Activated B cell treated with CpG ODN at 0.5 μM for 24 hours (primary cell): ENCODE measurements at regions of chr6 and their contacts with region 1.

Region 1: DNA sequence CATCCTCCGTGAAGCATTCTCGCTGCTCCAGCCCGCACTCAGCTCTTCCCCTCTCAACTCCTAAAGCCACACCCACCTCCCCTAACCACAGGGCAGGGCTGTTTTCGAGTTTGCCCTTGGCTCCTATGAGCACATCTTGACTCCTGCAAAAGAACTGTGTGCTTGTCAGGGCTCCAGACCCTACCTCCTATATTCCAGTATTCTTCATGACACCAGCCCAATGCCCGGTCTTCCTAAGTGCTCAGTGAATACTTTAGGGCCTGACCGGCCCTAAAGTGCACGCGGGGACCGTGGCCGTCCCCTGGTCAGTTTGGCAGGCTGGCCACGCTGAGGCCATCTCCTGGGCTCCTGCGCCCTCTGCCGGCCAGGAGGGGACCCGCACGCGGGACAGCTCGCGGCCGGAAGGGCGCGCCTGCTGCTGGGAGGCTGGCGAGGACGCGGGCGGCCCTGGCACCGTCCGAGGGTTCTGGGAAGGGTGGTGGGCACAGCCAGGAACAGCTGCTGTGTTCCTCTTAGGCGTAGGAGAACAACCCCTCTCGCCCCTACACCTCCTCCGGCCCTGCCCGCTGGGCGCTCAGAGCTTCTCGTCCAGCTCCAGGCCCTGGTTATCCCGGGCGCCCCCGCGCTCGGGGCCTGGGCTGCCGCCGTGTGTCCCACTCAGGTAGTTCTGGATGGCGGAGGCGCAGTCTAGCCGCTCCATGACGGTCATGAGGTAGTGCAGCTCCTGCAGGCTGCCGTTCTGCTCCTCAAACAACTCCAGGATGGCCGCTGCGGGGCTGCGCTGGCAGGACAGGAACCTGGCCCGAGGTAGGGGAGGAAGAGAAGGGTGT is 11.0 kb downstream of the UNC5CL start:
- DNase-seq: peak; percentile 80
- ATAC-seq: peak; percentile 89
- H3K4me3 Mint-ChIP-seq: peak overlapping the region; percentile 84
- H3K27ac Mint-ChIP-seq: peak overlapping the region; percentile 20
- H3K4me1 Mint-ChIP-seq: peaks cover 20% of the 10 kb centered on the region
- H3K27me3 Mint-ChIP-seq: no peaks in the 10 kb centered on the region
- CTCF ChIP-seq: peak; percentile 92

Region 2: DNA sequence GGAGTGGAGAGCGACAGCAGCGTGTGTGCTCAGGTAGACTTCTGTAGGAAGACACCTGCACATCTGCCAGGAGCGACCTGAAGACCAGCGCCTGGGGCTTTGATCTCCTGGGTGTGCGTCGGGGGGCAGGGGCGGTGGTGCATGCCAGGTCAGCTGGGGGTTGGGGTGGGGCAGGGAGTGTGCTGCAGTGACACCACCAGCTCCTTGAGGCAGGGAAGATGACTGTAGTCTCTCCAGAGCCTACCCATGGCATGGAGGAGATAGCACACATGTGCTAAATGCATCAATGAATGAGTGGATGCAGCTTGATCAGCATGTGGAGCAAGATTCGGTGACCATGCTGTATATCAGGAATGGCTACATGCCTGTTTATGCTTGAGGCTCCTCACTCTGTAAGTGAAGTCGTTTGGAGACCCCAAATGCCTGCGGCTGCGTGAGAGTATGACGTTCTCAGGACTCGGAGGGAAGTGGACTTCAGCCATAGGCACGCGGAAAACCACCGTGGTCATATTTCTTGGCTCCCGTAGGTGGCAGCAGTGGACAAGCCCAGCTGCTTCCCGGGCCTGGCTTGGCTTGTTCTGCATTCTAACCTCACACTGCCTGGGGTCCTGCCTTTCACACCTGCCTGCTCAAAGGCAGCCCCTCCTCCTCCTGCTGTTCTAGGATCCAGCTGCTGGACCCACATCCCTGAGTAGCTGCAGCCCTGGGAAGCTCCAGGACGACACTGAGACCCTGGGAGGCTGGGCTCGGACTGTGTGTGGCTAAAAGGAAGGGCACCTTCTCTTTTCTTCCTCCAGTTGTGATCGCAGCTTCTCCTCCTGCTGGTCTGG is 1666.1 kb before region 1 on chr6:
- CTCF ChIA-PET with region 1: interaction called, 4 read pairs
- POLR2A ChIA-PET with region 1: no interaction called
- intact Hi-C with region 1: loop called (anchors 5 kb)
- DNase-seq: peak; percentile 33
- ATAC-seq: peak; percentile 75
- H3K4me3 Mint-ChIP-seq: no peak overlapping the region
- H3K27ac Mint-ChIP-seq: no peak overlapping the region
- H3K4me1 Mint-ChIP-seq: peaks cover 2% of the 10 kb centered on the region
- H3K27me3 Mint-ChIP-seq: peaks cover 7% of the 10 kb centered on the region
- CTCF ChIP-seq: no peak

Region 3: DNA sequence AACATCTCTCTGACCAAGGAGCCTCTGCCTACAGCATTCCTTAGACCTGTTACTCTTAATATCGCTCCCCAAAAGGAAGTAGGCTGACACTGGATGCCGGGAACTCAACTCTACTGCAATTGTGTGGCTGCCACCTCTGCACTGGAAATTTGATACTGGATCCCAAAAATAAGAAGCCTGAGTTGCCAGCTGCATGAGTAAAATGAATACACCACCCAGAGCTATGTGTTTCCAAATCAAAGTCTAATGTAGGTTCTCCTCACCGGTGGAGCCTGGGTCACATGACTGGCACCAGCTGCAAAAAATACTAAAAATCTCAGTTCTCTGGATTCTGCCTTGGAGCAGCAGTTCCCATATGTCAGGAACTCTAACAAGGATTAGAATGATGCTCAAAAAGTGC is 25.8 kb before region 1 on chr6:
- CTCF ChIA-PET with region 1: interaction called, 4 read pairs
- POLR2A ChIA-PET with region 1: no interaction called
- intact Hi-C with region 1: loop called (anchors 1 kb)
- DNase-seq: no peak
- ATAC-seq: no peak
- H3K4me3 Mint-ChIP-seq: no peak overlapping the region
- H3K27ac Mint-ChIP-seq: no peak overlapping the region
- H3K4me1 Mint-ChIP-seq: no peaks in the 10 kb centered on the region
- H3K27me3 Mint-ChIP-seq: peaks cover 27% of the 10 kb centered on the region
- CTCF ChIP-seq: no peak

Region 4: DNA sequence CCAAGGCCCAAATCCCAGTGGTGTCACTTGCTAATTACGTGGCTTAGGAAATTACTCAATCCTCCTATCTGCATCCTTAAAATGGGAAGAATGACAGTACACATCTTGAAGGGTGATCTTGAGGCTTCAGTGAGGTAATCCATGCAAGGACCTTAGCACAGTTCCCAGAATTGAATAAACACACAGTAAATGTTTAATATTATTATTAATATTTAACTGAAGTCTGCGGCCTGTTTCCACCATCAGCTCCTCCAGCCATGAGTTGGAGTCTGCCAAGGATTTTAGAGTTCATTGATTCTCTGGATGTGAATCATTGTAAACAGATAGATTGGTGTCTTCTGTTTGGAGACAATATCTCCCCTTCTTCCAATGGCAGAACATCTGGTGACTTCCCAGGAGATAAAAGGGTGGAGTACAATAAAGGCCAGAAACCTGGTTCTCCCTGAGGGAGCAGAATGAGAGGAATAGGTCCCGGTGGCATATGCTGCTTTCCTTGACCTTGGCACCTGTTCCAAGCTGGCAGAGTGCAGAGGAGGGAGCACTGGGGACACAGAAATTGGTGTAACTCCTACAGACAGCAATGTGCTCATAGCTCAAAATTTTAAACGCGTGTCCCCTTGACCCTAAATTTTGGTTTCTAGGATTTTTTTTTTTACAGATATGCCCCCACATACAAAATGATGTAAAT is 14.4 kb before region 1 on chr6:
- CTCF ChIA-PET with region 1: interaction called, 16 read pairs
- POLR2A ChIA-PET with region 1: no interaction called
- intact Hi-C with region 1: no loop called
- DNase-seq: no peak
- ATAC-seq: no peak
- H3K4me3 Mint-ChIP-seq: no peak overlapping the region
- H3K27ac Mint-ChIP-seq: no peak overlapping the region
- H3K4me1 Mint-ChIP-seq: no peaks in the 10 kb centered on the region
- H3K27me3 Mint-ChIP-seq: peaks cover 6% of the 10 kb centered on the region
- CTCF ChIP-seq: no peak

Region 5: DNA sequence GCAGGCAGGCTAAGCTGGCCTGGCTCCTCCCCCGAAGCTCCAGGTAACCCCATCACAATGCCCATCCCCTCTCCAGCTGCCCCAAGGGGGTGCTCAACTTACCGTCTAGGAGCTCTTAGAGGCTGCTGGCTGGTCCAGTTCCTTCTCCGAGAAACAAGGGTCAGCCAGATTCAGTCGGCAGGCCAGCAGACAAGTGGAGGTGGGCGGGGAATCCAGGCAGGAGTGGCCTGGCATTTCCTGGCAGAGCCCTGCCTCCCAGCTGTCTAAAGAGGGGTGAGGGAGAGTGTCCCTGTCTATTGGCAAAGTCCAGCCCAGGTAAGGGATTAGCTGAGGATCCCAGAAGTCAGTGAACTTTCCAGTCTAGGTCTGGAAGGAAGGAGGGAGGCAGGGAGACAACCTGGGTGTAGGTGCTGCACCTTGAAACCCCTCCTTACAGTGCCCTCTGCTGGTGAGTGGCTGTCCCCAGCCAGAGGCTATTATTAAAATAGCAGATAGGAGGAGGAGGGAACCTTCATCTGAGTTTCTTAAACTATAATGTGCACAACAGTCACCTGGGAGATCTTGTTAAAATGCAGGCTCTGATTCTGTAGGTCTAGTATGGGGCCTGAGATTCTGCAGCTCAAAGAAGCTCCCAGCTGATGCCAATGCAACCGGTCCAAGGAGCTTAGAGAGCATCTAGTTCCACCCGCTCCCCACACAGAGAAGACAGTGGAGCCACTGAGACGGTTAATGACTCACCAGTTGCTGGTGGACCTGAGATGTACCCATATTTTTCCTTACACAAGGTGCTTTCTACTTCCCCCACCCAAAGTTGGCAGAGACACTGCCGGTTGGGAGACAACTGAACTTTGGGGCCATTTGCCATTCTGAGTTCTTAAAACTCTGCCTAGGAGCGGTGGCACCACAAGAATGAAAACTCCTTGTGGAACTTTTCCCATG is 11.3 kb after region 1 on chr6 and contains the start of gene UNC5CL:
- CTCF ChIA-PET with region 1: interaction called, 20 read pairs
- POLR2A ChIA-PET with region 1: no interaction called
- intact Hi-C with region 1: no loop called
- DNase-seq: no peak
- ATAC-seq: peak; percentile 50
- H3K4me3 Mint-ChIP-seq: no peak within 1 kb of the TSS
- H3K27ac Mint-ChIP-seq: no peak within 1 kb of the TSS
- H3K4me1 Mint-ChIP-seq: no peaks in the 10 kb centered on the region
- H3K27me3 Mint-ChIP-seq: no peaks in the 10 kb centered on the region
- CTCF ChIP-seq: no peak
- total RNA-seq, gene UNC5CL: 1.7 and 2.2 TPM in 2 replicates

Region 6: GRCh38 chr6:41051873-41052272 is 23.9 kb after region 1 on chr6:
- CTCF ChIA-PET with region 1: no interaction called
- POLR2A ChIA-PET with region 1: no interaction called
- intact Hi-C with region 1: no loop called
- DNase-seq: no peak
- ATAC-seq: peak; percentile 89
- H3K4me3 Mint-ChIP-seq: peak overlapping the region; percentile 25
- H3K27ac Mint-ChIP-seq: peak overlapping the region; percentile 73
- H3K4me1 Mint-ChIP-seq: peaks cover 21% of the 10 kb centered on the region
- H3K27me3 Mint-ChIP-seq: no peaks in the 10 kb centered on the region
- CTCF ChIP-seq: no peak

Region 7: GRCh38 chr6:41066867-41067304 is 38.9 kb after region 1 on chr6:
- CTCF ChIA-PET with region 1: interaction called, 7 read pairs
- POLR2A ChIA-PET with region 1: interaction called, 10 read pairs
- intact Hi-C with region 1: loop called (anchors 1 kb)
- DNase-seq: no peak
- ATAC-seq: no peak
- H3K4me3 Mint-ChIP-seq: no peak overlapping the region
- H3K27ac Mint-ChIP-seq: peak overlapping the region; percentile 12
- H3K4me1 Mint-ChIP-seq: peaks cover 19% of the 10 kb centered on the region
- H3K27me3 Mint-ChIP-seq: no peaks in the 10 kb centered on the region
- CTCF ChIP-seq: no peak

Region 8: GRCh38 chr6:41167173-41167963 is 139.4 kb after region 1 on chr6:
- CTCF ChIA-PET with region 1: no interaction called
- POLR2A ChIA-PET with region 1: no interaction called
- intact Hi-C with region 1: no loop called
- DNase-seq: no peak
- ATAC-seq: no peak
- H3K4me3 Mint-ChIP-seq: no peak overlapping the region
- H3K27ac Mint-ChIP-seq: no peak overlapping the region
- H3K4me1 Mint-ChIP-seq: peaks cover 10% of the 10 kb centered on the region
- H3K27me3 Mint-ChIP-seq: peaks cover 9% of the 10 kb centered on the region
- CTCF ChIP-seq: no peak

Region 9: DNA sequence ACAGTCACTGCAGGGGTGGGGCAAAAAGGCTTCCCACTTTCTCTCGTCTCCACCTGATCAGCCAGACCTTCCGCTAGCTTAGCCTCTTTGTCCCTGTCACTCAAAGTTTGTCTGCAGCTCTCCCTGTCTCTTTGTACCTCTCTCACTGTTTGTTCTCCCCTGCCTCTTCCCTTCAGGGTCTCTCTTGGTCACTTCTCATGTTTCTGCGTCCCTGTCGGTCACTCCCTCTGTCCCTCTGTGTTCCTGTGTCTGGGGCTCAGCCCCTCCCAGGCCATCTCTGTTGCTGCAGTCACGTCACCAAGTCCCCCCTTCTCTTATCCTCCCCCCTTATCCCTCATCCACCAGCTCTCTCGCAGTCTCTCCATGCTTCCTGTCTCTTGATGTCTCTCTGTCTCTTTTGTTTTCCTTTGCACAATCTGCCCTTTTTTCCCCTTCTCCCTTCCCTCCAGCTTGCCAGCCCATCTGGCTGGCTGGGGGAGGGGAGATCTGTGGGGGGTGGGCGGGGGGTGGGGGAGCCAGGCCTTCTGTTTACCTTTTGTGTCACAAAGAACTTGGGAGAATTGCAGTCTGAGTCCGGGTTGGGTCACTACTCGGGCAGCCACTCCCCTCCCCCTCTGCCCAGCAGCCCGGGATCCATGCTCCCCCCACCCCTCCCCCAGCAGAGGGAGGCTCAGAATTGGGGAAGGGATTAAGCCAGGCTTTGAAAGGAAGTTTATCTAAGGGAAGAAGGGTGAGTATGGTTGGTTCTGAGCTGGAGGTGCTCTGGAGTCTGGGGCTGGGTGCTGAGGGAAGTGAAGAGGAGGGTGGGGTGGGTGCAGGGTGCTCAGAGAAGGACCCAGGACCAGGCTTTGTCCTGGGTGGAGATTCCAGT is 550.4 kb after region 1 on chr6:
- CTCF ChIA-PET with region 1: no interaction called
- POLR2A ChIA-PET with region 1: no interaction called
- intact Hi-C with region 1: no loop called
- DNase-seq: no peak
- ATAC-seq: no peak
- H3K4me3 Mint-ChIP-seq: no peak overlapping the region
- H3K27ac Mint-ChIP-seq: no peak overlapping the region
- H3K4me1 Mint-ChIP-seq: peaks cover 30% of the 10 kb centered on the region
- H3K27me3 Mint-ChIP-seq: no peaks in the 10 kb centered on the region
- CTCF ChIP-seq: no peak